GM18951 (cell line): ENCODE measurements at regions of chr1 and their contacts with region 1.

Region 1: GRCh38 chr1:163315773-163316374 is 5.9 kb upstream of the NUF2 start:
- POLR2A ChIP-seq: no peak

Region 2: GRCh38 chr1:162878000-162878596 is 437.8 kb before region 1 on chr1:
- in situ Hi-C with region 1: loop called (anchors 10 kb)
- POLR2A ChIP-seq: no peak

Region 3: DNA sequence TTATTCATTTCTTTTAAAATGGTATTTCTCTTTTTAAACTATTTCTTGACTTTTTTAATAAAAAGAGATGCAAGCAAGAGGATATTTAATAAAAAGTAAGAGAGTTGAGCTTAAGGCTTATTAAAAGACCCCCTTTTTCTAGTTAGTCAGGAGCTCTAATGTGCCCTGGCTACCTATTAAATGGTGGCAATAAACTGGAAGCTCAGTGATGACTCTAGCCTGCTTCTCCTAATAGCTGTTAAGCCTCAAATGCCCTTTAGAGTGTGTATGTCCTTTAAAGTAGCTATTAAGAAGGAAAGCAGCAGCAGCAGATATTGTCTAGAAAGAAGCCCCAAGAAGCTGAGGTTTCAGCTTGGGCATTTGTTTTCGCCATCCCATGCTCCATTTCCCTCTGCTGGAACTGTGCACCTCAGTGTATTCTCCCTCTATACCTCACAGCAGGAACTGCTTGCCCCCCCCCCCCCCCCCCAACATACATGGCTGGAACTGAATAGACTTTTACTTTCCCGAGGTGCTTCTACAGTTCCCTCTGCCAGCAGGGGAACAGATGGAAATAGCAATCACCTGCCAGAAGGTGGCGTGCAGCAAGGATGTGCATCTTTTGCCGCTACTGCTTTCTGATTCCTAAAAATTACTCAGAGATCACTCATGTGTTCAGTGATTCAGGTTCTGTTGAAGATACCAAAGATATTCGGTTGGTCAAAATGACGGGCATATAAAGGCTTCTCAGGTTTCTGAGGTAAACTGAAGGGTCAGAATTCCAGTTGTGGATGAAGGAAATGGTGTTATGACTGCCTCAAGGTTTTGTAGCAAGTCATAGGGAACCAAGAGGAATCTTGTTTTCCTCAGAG is 244.2 kb before region 1 on chr1:
- in situ Hi-C with region 1: loop called (anchors 10 kb)
- POLR2A ChIP-seq: no peak

Region 4: GRCh38 chr1:163395790-163396189 is 79.9 kb after region 1 on chr1:
- in situ Hi-C with region 1: no loop called
- POLR2A ChIP-seq: no peak